ENCODE measurements at regions of chr6 and their contacts with region 1.

Region 1: GRCh38 chr6:44456070-44456965 is 68.8 kb downstream of the CDC5L start:
- DNase-seq: peak; percentile 63
- H3K4me3 ChIP-seq: peak overlapping the region in 2 of 3 experiments; percentile 19 to 50
- H3K27ac ChIP-seq: peak overlapping the region; percentile 8
- H3K4me1 ChIP-seq: peaks cover 23% of the 10 kb centered on the region
- H3K27me3 ChIP-seq: peaks cover 0 to 3% of the 10 kb centered on the region in 2 experiments
- CTCF ChIP-seq: peak; percentile 74 to 81
- POLR2A ChIP-seq: no peak

Region 2: GRCh38 chr6:44431118-44431725 is 25.1 kb before region 1 on chr6:
- CTCF ChIA-PET with region 1: interaction called, 110 read pairs
- POLR2A ChIA-PET with region 1: no interaction called
- dilution Hi-C with region 1: no loop called
- intact Hi-C with region 1: loop called (anchors 1 kb)
- DNase-seq: peak; percentile 73
- H3K4me3 ChIP-seq: no peak overlapping the region
- H3K27ac ChIP-seq: no peak overlapping the region
- H3K4me1 ChIP-seq: no peaks in the 10 kb centered on the region
- H3K27me3 ChIP-seq: no peaks in the 10 kb centered on the region
- CTCF ChIP-seq: peak; percentile 41 to 50
- POLR2A ChIP-seq: no peak

Measured in endothelial cell of umbilical vein (primary cell).